Activated CD8-positive, alpha-beta memory T cell treated with anti-CD3 and anti-CD28 coated beads, Interleukin-2, amount 10 ng/mL, durations not matched to agents 7 days and 5 days (primary cell): ENCODE measurements at regions of chr2 and their contacts with region 1.

Region 1: GRCh38 chr2:95053543-95053942 is 28.0 kb downstream of the MAL start:
- DNase-seq: no peak
- ATAC-seq: no peak
- H3K4me3 Mint-ChIP-seq: no peak overlapping the region
- H3K27ac Mint-ChIP-seq: no peak overlapping the region
- H3K4me1 Mint-ChIP-seq: peaks cover 48% of the 10 kb centered on the region
- H3K27me3 Mint-ChIP-seq: no peaks in the 10 kb centered on the region

Region 2: GRCh38 chr2:95032868-95033603 is 20.5 kb before region 1 on chr2:
- CTCF ChIA-PET with region 1: no interaction called
- DNase-seq: no peak
- ATAC-seq: no peak
- H3K4me3 Mint-ChIP-seq: no peak overlapping the region
- H3K27ac Mint-ChIP-seq: no peak overlapping the region
- H3K4me1 Mint-ChIP-seq: peaks cover 25% of the 10 kb centered on the region
- H3K27me3 Mint-ChIP-seq: no peaks in the 10 kb centered on the region

Region 3: GRCh38 chr2:95043300-95044093 is 10.0 kb before region 1 on chr2:
- CTCF ChIA-PET with region 1: interaction called, 13 read pairs
- DNase-seq: no peak
- ATAC-seq: peak; percentile 37
- H3K4me3 Mint-ChIP-seq: no peak overlapping the region
- H3K27ac Mint-ChIP-seq: no peak overlapping the region
- H3K4me1 Mint-ChIP-seq: peaks cover 49% of the 10 kb centered on the region
- H3K27me3 Mint-ChIP-seq: no peaks in the 10 kb centered on the region